ENCODE measurements at regions of chr7 and their contacts with region 1.

Region 1: DNA sequence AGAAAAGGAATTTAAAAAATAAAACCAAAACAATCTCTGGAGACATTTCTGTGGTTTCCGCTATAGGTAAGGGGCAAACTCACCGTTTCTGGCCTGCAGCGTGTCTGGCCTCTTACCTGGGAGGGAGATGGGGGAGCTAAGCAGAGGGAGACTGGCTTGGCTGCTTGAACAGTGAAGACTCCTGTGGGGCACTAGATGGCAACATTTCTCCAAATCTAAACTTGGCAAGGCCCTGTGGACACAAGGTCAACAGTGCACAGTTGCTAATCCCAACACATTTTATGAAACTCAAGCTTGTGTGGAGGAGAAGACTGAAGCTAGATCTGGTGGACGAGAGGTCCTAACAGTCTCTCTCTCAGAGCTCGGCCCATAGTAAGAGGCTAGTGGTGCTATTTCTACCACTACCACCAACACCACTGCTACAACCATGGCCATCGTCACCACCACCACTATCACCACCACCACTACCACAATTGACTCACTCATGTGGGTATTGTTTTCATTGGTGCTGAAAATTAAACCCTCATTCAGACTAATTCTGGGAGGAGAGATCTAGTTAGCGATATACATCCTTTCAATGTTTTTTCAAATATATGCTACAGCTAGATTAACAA is 28.4 kb upstream of the CDHR3 start:
- DNase-seq: no peak
- H3K4me3 ChIP-seq: no peak overlapping the region
- H3K27ac ChIP-seq: peak overlapping the region in 3 of 4 donors; percentile 69 to 81 (median 80)
- H3K4me1 ChIP-seq: peaks cover 0 to 31% (median 22%) of the 10 kb centered on the region in 4 donors
- H3K27me3 ChIP-seq: no peaks in the 10 kb centered on the region
- CTCF ChIP-seq: no peak
- EP300 ChIP-seq: no peak
- POLR2A ChIP-seq: no peak

Region 2: GRCh38 chr7:105769901-105770628 is 164.6 kb before region 1 on chr7:
- intact Hi-C with region 1: loop called (anchors 5 kb)
- DNase-seq: peak; percentile 66
- H3K4me3 ChIP-seq: no peak overlapping the region
- H3K27ac ChIP-seq: peak overlapping the region; percentile 1 to 74 (median 55)
- H3K4me1 ChIP-seq: peaks cover 0 to 27% (median 21%) of the 10 kb centered on the region in 4 donors
- H3K27me3 ChIP-seq: no peaks in the 10 kb centered on the region
- CTCF ChIP-seq: no peak
- EP300 ChIP-seq: no peak
- POLR2A ChIP-seq: no peak

Region 3: GRCh38 chr7:105958012-105958411 is 23.3 kb after region 1 on chr7:
- intact Hi-C with region 1: no loop called
- DNase-seq: no peak
- H3K4me3 ChIP-seq: no peak overlapping the region
- H3K27ac ChIP-seq: no peak overlapping the region
- H3K4me1 ChIP-seq: peaks cover 0 to 12% (median 7%) of the 10 kb centered on the region in 4 donors
- H3K27me3 ChIP-seq: no peaks in the 10 kb centered on the region
- CTCF ChIP-seq: no peak
- EP300 ChIP-seq: no peak
- POLR2A ChIP-seq: no peak

Region 4: DNA sequence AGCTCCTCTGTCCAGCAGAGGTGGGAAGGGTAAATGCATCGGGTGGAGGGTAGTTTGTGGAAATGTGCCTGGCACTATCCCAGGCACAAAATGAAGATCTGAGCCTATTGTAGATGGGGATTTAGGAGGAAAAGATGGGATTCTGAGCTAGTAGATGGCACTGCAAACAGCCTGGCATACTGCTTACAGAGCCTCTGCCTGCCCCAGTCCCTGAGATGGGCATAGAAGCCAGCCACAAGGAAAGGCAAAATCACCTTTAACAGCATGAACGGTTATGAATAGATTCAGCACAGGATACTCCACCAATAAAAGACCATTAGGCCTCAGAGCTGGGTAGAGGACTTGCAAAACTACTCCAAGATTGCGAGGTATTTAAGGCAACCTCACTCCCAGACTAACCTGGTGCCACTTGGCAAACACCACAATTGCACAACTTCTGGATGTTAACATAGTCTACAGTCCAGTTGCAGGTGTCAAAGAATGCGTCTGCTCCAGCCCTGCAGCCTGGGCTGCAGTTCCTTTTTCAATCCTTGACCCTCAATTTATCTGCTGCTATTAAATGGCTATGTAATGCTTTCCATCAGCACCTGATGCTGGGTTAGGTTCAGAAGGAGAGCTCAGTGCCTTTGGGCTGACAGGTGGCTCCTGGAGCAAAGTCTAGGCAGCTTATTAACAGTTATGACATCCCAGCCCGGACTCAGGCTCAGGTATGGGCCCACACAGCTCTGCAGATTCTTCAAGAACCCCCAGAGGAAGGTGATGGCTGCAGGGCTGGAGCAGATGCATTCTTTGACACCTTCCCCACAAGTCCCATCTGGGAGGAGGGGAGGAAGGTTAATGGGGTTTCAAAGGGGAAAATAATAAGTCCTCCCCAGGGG is 62.4 kb after region 1 on chr7:
- intact Hi-C with region 1: no loop called
- DNase-seq: no peak
- H3K4me3 ChIP-seq: no peak overlapping the region
- H3K27ac ChIP-seq: no peak overlapping the region
- H3K4me1 ChIP-seq: peaks cover 0 to 6% (median 0%) of the 10 kb centered on the region in 4 donors
- H3K27me3 ChIP-seq: no peaks in the 10 kb centered on the region
- CTCF ChIP-seq: no peak
- EP300 ChIP-seq: no peak
- POLR2A ChIP-seq: no peak

Region 5: DNA sequence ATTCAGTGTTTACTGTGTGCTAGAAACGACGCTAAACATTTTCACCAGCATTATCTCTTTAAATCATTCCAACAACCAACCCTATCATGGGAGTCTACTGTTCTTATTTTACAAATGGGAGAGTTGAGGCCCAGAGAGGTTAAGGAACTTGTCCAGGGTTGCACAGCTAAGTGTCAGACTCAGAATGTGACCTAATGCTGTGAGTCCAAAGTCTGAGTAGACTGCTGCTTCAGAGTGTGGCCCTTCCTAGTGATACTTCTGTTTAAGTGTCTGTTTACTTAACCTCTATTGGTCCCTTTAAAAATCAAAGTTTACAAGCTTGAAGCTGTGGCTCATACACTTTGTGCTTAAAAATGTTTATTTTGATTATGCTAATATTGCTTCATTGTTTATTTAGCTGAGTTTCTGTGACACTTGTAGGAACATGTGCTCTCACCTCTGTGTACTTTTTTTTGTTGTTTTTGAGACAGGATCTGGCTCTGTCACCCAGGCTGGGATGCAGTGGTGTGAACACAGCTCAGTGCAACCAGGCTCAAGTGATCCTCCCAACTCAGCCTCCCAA is 261.9 kb after region 1 on chr7:
- intact Hi-C with region 1: no loop called
- DNase-seq: no peak
- H3K4me3 ChIP-seq: no peak overlapping the region
- H3K27ac ChIP-seq: no peak overlapping the region
- H3K4me1 ChIP-seq: peaks cover 0 to 10% (median 0%) of the 10 kb centered on the region in 4 donors
- H3K27me3 ChIP-seq: no peaks in the 10 kb centered on the region
- CTCF ChIP-seq: no peak
- EP300 ChIP-seq: no peak
- POLR2A ChIP-seq: no peak

Measured in sigmoid colon (tissue), 7 donors.